Ascending aorta (tissue), 2 donors: ENCODE measurements at regions of chr5 and their contacts with region 1.

Region 1: GRCh38 chr5:109409844-109410388 is at the start of gene PJA2:
- DNase-seq: peak; percentile 99 to 100
- H3K4me3 ChIP-seq: peak within 1 kb of the TSS; percentile 86 to 94
- H3K27ac ChIP-seq: peak within 1 kb of the TSS; percentile 98
- H3K4me1 ChIP-seq: peaks cover 2 to 25% of the 10 kb centered on the region in 2 donors
- H3K27me3 ChIP-seq: no peaks in the 10 kb centered on the region
- CTCF ChIP-seq: peak; percentile 8 to 27 (median 17)
- total RNA-seq, gene PJA2: 56.1 TPM

Region 2: GRCh38 chr5:108381954-108382783 is 1027.7 kb before region 1 on chr5 and contains the start of gene FBXL17:
- intact Hi-C with region 1: loop called (anchors 5 kb)
- DNase-seq: peak; percentile 74 to 97
- H3K4me3 ChIP-seq: peak within 1 kb of the TSS; percentile 98 to 99
- H3K27ac ChIP-seq: peak within 1 kb of the TSS; percentile 100
- H3K4me1 ChIP-seq: peaks cover 4 to 14% of the 10 kb centered on the region in 2 donors
- H3K27me3 ChIP-seq: no peaks in the 10 kb centered on the region
- CTCF ChIP-seq: no peak
- total RNA-seq, gene FBXL17: 13.6 TPM

Region 3: GRCh38 chr5:108748401-108749127 is 661.4 kb before region 1 on chr5:
- intact Hi-C with region 1: loop called (anchors 2 kb)
- DNase-seq: peak; percentile 99 to 100
- H3K4me3 ChIP-seq: peak overlapping the region; percentile 85 to 86
- H3K27ac ChIP-seq: peak overlapping the region; percentile 99
- H3K4me1 ChIP-seq: peaks cover 0 to 5% of the 10 kb centered on the region in 2 donors
- H3K27me3 ChIP-seq: no peaks in the 10 kb centered on the region
- CTCF ChIP-seq: peak in 1 of 3 experiments; percentile 27

Region 4: DNA sequence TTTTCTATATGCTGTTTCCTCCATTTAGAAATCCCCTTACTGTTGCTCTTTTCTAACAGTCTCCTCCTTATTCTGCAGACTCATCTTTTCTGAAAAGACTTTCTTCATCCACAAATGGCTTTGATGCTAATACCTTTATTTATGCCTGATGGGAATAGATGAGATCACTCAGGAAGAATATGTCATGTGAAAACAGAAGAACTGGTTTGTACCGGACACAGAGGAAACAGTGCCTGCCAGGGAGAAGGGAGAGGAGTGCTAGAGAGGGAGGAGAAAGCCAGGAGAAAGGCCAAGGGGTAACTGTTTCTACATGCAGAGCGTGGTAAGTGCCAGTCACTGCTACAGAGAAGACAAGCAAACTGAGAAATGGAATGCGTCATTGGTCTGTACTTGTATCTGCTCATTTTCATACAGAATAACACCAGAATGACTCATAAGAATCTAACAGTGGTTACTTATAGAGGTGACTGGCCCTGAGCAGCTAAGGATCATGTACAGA is 45.7 kb after region 1 on chr5:
- intact Hi-C with region 1: loop called (anchors 2 kb)
- DNase-seq: peak; percentile 13 to 78
- H3K4me3 ChIP-seq: peak overlapping the region in 1 of 2 donors; percentile 44
- H3K27ac ChIP-seq: peak overlapping the region; percentile 76 to 82
- H3K4me1 ChIP-seq: peaks cover 0 to 19% of the 10 kb centered on the region in 2 donors
- H3K27me3 ChIP-seq: no peaks in the 10 kb centered on the region
- CTCF ChIP-seq: no peak

Region 5: DNA sequence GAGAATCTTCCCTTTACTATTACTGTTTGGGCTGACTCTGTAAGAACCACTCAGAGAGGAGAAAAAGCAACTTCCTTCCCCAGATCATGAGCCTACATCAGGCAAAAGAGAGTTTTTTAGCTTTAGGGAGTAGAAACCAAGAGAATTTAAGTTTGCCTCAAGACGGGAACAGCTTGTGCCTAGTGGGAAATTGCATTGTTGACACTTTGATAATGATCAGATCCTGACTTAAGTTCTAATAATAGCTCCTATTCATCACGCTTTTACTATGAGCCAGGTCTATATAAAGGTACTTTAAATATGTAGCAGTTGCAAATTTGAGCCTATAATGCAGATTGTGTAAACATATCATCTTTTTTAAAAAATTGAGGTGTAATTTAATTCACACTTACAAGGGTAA is 578.1 kb after region 1 on chr5:
- intact Hi-C with region 1: loop called (anchors 5 kb)
- DNase-seq: no peak
- H3K4me3 ChIP-seq: peak overlapping the region in 1 of 2 donors; percentile 7
- H3K27ac ChIP-seq: peak overlapping the region; percentile 90 to 97
- H3K4me1 ChIP-seq: peaks cover 0 to 28% of the 10 kb centered on the region in 2 donors
- H3K27me3 ChIP-seq: no peaks in the 10 kb centered on the region
- CTCF ChIP-seq: no peak